OCI-LY7 (cell line): ENCODE measurements at regions of chr15 and their contacts with region 1.

Region 1: GRCh38 chr15:33322091-33322490 is 11.3 kb downstream of the RYR3 start:
- DNase-seq: no peak
- H3K4me3 ChIP-seq: no peak overlapping the region
- H3K27ac ChIP-seq: peak overlapping the region; percentile 87
- H3K4me1 ChIP-seq: peaks cover 51% of the 10 kb centered on the region
- CTCF ChIP-seq: no peak

Region 2: DNA sequence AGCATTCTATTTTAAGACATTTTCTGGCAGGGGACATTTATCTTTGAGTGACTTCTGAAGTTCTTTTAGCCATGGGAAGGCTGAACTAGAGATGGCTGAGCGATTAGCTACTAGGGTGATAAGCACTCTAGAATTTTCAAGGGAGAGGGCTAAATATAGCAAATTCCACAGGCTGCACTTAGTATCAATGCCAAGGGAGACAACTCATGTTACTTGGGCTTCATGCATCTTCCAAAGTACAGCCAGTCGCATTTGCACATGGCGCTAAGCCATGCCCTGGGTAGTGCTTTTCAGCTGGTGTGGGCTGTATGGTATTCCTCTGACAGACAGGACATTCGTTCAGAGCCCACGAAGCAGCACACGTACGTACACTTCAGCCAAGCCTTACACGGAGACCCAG is 58.3 kb after region 1 on chr15:
- CTCF ChIA-PET with region 1: no interaction called
- POLR2A ChIA-PET with region 1: interaction called, 3 read pairs
- intact Hi-C with region 1: loop called (anchors 5 kb)
- DNase-seq: no peak
- H3K4me3 ChIP-seq: no peak overlapping the region
- H3K27ac ChIP-seq: no peak overlapping the region
- H3K4me1 ChIP-seq: peaks cover 19% of the 10 kb centered on the region
- CTCF ChIP-seq: no peak